HCT116 (cell line): ENCODE measurements at regions of chr17 and their contacts with region 1.

Region 1: DNA sequence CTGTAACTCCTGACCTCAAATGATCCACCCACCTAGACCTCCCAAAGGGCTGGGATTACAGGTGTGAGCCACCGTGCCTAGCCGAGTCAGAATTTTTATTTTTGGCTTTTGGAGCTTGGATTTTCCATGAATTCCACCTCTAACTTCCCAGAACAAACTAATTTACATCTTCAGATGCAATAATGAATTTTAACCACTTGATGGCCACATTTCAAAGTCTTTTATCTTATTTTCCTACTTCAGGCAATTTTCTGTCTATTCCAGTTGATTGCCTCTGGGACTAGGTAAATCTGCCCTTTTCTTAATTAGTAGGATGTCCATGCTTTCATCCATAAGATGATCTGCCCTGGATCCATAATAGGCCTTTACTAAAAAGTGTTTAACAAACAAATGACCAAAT is 156.4 kb upstream of the ANKFN1 start:
- DNase-seq: no peak
- ATAC-seq: no peak
- H3K4me3 ChIP-seq: no peak overlapping the region
- H3K27ac ChIP-seq: no peak overlapping the region
- H3K4me1 ChIP-seq: no peaks in the 10 kb centered on the region
- H3K27me3 ChIP-seq: no peaks in the 10 kb centered on the region
- CTCF ChIP-seq: peak; percentile 6 to 42 (median 14); a peak in 2 of 6 replicates
- POLR2A ChIP-seq: no peak
- RAD21 ChIP-seq: peak; percentile 28

Region 2: GRCh38 chr17:55845385-55845784 is 151.4 kb before region 1 on chr17:
- CTCF ChIA-PET with region 1: no interaction called
- POLR2A ChIA-PET with region 1: no interaction called
- RAD21 ChIA-PET with region 1: no interaction called
- intact Hi-C with region 1: no loop called
- DNase-seq: no peak
- ATAC-seq: peak; percentile 47
- H3K4me3 ChIP-seq: no peak overlapping the region
- H3K27ac ChIP-seq: no peak overlapping the region
- H3K4me1 ChIP-seq: no peaks in the 10 kb centered on the region
- H3K27me3 ChIP-seq: peaks cover 26% of the 10 kb centered on the region
- CTCF ChIP-seq: peak in 1 of 3 experiments; percentile 32; a peak in 2 of 6 replicates
- POLR2A ChIP-seq: no peak
- RAD21 ChIP-seq: no peak; the same call in 1 of the 2 replicates

Region 3: DNA sequence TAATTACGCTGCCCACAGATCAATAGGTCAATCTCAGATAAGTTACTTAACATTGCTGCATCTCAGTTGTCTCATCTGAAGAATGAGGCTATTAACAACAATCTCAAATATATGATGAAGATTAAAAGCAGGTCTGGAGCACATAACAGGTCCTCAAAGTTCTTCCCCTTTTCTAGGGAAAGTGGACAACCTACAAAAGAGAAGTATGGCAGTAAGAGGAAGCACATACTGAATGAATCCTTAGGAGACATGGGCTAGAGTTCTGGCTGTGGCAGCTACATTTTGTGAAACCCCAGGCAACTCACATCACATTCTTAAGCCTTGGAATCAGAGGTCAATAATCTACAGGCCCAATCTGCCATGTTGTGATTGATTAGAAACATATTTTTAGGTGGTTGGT is 65.4 kb before region 1 on chr17:
- CTCF ChIA-PET with region 1: no interaction called
- POLR2A ChIA-PET with region 1: no interaction called
- RAD21 ChIA-PET with region 1: no interaction called
- intact Hi-C with region 1: loop called (anchors 10 kb)
- DNase-seq: no peak
- ATAC-seq: no peak
- H3K4me3 ChIP-seq: no peak overlapping the region
- H3K27ac ChIP-seq: no peak overlapping the region
- H3K4me1 ChIP-seq: no peaks in the 10 kb centered on the region
- H3K27me3 ChIP-seq: peaks cover 6% of the 10 kb centered on the region
- CTCF ChIP-seq: no peak
- POLR2A ChIP-seq: no peak
- RAD21 ChIP-seq: no peak

Region 4: DNA sequence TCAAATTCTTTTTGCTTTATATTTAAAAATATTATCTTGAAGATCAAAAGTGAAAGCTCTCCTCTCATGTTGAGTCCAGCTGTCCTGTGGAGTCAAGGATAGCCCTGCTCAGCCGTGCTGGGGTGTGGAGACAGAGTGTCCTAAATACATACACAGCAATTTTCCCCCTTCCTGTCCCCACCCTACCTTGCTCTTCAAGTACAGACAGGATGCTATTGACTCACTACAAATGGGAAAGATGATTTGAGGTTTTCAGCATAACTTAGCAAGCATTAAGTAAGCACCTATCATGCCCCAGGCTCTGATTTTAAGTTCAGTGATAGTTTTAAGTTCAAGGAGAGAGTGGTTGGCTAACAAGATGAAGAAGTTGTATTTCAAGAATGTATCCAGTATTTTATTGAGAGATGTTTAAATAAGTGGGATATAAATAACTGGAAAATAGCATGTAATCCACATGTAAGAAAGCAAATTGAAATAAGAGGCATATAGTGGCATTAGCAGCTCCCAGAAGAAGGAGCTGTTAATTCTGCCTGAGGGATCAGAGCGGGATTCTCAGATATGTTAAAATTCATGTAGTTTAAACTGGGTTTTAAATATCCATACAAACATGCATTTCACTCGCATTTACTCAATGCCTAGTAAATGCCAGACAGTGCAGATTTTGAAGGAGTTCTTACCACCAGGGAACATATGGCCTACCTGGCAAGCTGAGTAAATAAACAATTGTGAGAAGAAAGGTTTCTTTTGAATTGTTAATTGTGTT is 27.1 kb before region 1 on chr17:
- CTCF ChIA-PET with region 1: no interaction called
- POLR2A ChIA-PET with region 1: no interaction called
- RAD21 ChIA-PET with region 1: no interaction called
- intact Hi-C with region 1: no loop called
- DNase-seq: no peak
- ATAC-seq: no peak
- H3K4me3 ChIP-seq: no peak overlapping the region
- H3K27ac ChIP-seq: no peak overlapping the region
- H3K4me1 ChIP-seq: no peaks in the 10 kb centered on the region
- H3K27me3 ChIP-seq: 0 out of 2 replicates have a peak, but pooled peaks cover 5% of the 10 kb centered on the region
- CTCF ChIP-seq: no peak
- POLR2A ChIP-seq: no peak
- RAD21 ChIP-seq: no peak